ENCODE measurements at regions of chr1 and their contacts with region 1.

Region 1: DNA sequence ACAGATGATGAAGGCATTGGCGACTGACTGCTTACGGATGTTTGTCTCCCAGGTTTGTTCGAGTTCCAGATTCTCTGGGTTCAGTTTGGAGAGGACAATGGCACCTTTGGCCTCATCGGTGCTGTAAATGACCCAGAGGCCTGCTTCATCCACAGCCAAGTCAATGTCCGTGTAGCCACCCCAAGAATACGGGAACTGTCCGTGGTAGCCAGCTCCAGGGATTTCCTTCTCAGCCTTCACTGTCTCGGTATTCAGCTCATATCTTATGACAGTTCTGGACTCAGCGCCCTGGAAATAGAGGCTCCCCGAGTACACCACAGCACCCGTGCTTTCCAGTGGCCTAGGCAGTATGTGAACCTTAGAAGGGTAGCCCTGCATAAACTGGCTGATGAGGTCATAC is 14.1 kb downstream of the MYOCOS start:
- DNase-seq: peak in 1 of 2 experiments; percentile 21
- H3K4me3 ChIP-seq: no peak overlapping the region
- H3K4me3 Mint-ChIP-seq: no peak overlapping the region
- H3K27ac Mint-ChIP-seq: no peak overlapping the region
- H3K4me1 ChIP-seq: no peaks in the 10 kb centered on the region
- H3K4me1 Mint-ChIP-seq: no peaks in the 10 kb centered on the region
- H3K27me3 ChIP-seq: no peaks in the 10 kb centered on the region
- H3K27me3 Mint-ChIP-seq: no peaks in the 10 kb centered on the region
- CTCF ChIP-seq: no peak

Region 2: DNA sequence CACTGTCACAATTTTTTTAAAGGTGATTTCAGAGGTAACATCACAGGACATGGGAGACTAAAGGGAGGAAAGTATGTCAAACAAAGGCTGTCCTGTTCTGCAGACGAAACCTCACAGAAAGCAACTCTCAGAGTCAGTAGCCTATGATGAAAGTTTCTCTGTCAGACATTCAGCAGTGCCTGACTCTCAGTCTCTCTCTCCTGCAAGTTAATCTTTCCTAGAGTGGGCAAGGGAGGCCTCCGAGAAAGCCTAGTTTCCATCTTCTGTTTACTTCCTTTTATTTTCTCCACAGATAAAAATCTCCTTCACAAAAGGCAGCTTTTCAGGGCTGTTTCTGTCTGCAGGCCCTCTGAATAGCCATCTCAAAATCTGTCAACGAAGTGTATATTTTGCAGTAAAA is 475.9 kb before region 1 on chr1:
- CTCF ChIA-PET with region 1: no interaction called
- POLR2A ChIA-PET with region 1: interaction called, 10 read pairs
- intact Hi-C with region 1: no loop called
- DNase-seq: peak; percentile 54 to 56
- H3K4me3 ChIP-seq: no peak overlapping the region
- H3K4me3 Mint-ChIP-seq: peak overlapping the region; percentile 54
- H3K27ac Mint-ChIP-seq: peak overlapping the region; percentile 88
- H3K4me1 ChIP-seq: peaks cover 35% of the 10 kb centered on the region
- H3K4me1 Mint-ChIP-seq: peaks cover 29% of the 10 kb centered on the region
- H3K27me3 ChIP-seq: no peaks in the 10 kb centered on the region
- H3K27me3 Mint-ChIP-seq: no peaks in the 10 kb centered on the region
- CTCF ChIP-seq: no peak